Activated B cell treated with CpG ODN at 0.5 μM for 24 hours (primary cell): ENCODE measurements at regions of chr10 and their contacts with region 1.

Region 1: GRCh38 chr10:91389636-91390512 is 20.3 kb upstream of the HECTD2 start:
- DNase-seq: no peak
- ATAC-seq: peak; percentile 91
- H3K4me3 Mint-ChIP-seq: no peak overlapping the region
- H3K27ac Mint-ChIP-seq: no peak overlapping the region
- H3K4me1 Mint-ChIP-seq: peaks cover 3% of the 10 kb centered on the region
- H3K27me3 Mint-ChIP-seq: peaks cover 13% of the 10 kb centered on the region
- CTCF ChIP-seq: peak; percentile 73

Region 2: DNA sequence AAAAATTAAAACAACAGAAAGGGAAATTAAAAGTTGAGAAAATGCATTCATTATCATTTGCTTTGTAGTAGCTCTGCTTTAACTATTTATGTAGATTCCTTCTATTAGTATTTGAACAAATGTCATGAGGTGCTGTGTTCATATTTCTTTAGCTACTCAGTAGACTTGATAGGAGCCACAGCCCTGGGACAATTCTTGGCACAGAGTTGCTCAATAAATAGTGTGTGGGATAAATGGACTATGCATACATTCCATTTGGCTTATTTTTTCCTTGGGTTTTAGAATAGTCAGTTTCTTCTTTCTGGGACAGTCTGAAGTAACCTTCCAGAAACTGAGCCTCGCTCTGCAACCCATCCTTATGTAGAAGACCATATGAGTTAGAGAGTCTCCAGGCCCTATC is 504.7 kb before region 1 on chr10:
- CTCF ChIA-PET with region 1: no interaction called
- POLR2A ChIA-PET with region 1: no interaction called
- intact Hi-C with region 1: loop called (anchors 1 kb)
- DNase-seq: no peak
- ATAC-seq: no peak
- H3K4me3 Mint-ChIP-seq: no peak overlapping the region
- H3K27ac Mint-ChIP-seq: no peak overlapping the region
- H3K4me1 Mint-ChIP-seq: no peaks in the 10 kb centered on the region
- H3K27me3 Mint-ChIP-seq: no peaks in the 10 kb centered on the region
- CTCF ChIP-seq: no peak

Region 3: GRCh38 chr10:91298224-91298871 is 91.5 kb before region 1 on chr10:
- CTCF ChIA-PET with region 1: no interaction called
- POLR2A ChIA-PET with region 1: no interaction called
- intact Hi-C with region 1: loop called (anchors 5 kb)
- DNase-seq: peak; percentile 58
- ATAC-seq: peak; percentile 97
- H3K4me3 Mint-ChIP-seq: peak overlapping the region; percentile 70
- H3K27ac Mint-ChIP-seq: no peak overlapping the region
- H3K4me1 Mint-ChIP-seq: peaks cover 9% of the 10 kb centered on the region
- H3K27me3 Mint-ChIP-seq: peaks cover 8% of the 10 kb centered on the region
- CTCF ChIP-seq: peak; percentile 53

Region 4: DNA sequence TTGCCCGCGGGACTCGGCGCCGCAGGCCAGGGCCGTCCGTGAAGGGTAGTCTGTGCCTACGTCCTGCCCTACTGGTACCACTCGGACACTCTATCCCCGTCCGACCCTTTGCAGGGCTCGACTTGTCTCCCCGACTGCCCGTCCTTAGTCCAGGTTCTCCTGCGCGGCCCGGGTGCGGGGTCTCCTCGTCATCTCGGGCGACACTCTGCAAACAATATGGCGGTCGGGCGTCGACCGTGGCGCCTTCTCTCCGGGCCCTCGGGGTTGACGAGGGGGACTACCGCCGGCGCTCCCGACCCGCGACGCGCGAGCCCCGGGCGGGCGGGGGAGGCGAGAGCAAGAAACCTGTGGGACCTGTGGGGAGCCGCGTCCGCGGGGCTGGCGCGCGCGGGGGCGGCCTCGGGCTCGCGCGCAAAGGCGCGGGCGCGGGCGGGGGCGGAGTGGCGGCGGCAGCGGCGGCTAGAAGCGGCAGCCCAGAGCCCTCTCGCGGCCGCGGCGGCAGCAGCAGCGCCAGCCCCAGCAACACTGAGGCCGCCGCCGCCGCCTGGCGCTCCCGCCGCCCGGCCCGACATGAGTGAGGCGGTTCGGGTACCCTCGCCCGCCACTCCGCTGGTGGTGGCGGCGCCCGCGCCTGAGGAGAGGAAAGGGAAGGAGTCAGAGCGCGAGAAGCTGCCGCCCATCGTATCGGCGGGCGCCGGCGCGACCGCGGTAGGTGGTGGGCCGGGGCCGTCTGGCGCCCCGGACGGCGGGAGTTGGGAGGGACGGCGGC is 20.2 kb after region 1 on chr10 and contains the start of gene HECTD2:
- CTCF ChIA-PET with region 1: interaction called, 3 read pairs
- POLR2A ChIA-PET with region 1: interaction called, 6 read pairs
- intact Hi-C with region 1: loop called (anchors 1 kb)
- DNase-seq: peak; percentile 84
- ATAC-seq: peak; percentile 82
- H3K4me3 Mint-ChIP-seq: peak within 1 kb of the TSS; percentile 89
- H3K27ac Mint-ChIP-seq: peak within 1 kb of the TSS; percentile 90
- H3K4me1 Mint-ChIP-seq: peaks cover 13% of the 10 kb centered on the region
- H3K27me3 Mint-ChIP-seq: no peaks in the 10 kb centered on the region
- CTCF ChIP-seq: no peak
- total RNA-seq, gene HECTD2: 8.1 and 8.6 TPM in 2 replicates

Region 5: DNA sequence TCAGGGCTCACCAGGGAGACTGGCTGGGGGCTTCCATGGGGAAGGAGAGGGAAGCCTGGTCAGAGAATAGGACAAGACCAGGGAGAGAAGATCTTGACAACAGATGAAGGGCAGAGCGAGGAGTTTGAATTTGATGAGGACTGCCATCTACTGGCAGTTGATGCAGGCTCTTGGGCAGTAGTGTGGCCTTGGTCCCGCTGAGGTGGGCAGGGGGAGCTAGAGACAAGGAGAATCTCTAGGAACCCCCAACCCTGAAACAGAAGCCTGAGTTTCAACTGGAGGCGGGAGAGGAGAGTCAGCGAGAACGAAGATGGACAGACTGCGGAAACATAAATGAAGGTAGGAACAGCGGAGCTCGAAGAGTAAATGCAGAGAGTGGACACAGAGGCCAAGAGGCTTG is 162.0 kb after region 1 on chr10:
- CTCF ChIA-PET with region 1: no interaction called
- POLR2A ChIA-PET with region 1: no interaction called
- intact Hi-C with region 1: loop called (anchors 10 kb)
- DNase-seq: no peak
- ATAC-seq: no peak
- H3K4me3 Mint-ChIP-seq: no peak overlapping the region
- H3K27ac Mint-ChIP-seq: no peak overlapping the region
- H3K4me1 Mint-ChIP-seq: no peaks in the 10 kb centered on the region
- H3K27me3 Mint-ChIP-seq: no peaks in the 10 kb centered on the region
- CTCF ChIP-seq: no peak

Region 6: GRCh38 chr10:91632671-91633550 is 243.0 kb after region 1 on chr10 and contains the start of gene PPP1R3C:
- CTCF ChIA-PET with region 1: interaction called, 19 read pairs
- POLR2A ChIA-PET with region 1: no interaction called
- intact Hi-C with region 1: loop called (anchors 1 kb)
- DNase-seq: peak; percentile 32
- ATAC-seq: peak; percentile 74
- H3K4me3 Mint-ChIP-seq: peak within 1 kb of the TSS; percentile 75
- H3K27ac Mint-ChIP-seq: no peak within 1 kb of the TSS
- H3K4me1 Mint-ChIP-seq: peaks cover 14% of the 10 kb centered on the region
- H3K27me3 Mint-ChIP-seq: peaks cover 46% of the 10 kb centered on the region
- CTCF ChIP-seq: no peak
- total RNA-seq, gene PPP1R3C: not detected in 2 replicates

Region 7: DNA sequence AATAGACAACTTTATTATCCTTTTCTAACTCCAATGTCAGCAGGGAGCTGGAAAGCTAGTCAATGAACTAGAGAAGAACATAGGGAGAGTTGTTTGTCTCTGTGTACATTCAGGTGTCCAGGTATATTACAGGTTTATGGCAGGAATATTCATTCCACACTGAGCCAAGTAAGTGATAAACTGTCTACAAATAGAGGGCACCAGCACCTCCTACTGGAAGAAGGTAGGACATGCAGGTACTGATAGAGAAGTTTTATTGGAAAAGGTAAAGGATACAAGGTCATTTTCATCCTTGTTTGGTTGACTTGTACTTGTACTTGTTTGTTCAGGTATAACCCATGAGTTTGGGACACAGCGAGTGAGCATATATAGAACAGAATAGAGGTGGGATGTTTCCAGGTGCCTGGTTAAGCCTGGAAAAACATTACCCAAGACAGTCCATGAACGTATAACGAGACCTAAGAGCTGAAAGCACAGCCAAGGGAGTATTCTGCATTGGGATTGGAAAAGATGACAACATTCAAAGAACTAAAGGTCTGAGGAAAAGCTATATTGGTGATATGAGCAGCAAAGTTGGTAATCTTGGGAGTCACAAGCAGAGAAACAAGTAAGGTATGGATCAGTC is 304.4 kb after region 1 on chr10:
- CTCF ChIA-PET with region 1: no interaction called
- POLR2A ChIA-PET with region 1: no interaction called
- intact Hi-C with region 1: loop called (anchors 1 kb)
- DNase-seq: no peak
- ATAC-seq: no peak
- H3K4me3 Mint-ChIP-seq: no peak overlapping the region
- H3K27ac Mint-ChIP-seq: no peak overlapping the region
- H3K4me1 Mint-ChIP-seq: no peaks in the 10 kb centered on the region
- H3K27me3 Mint-ChIP-seq: peaks cover 3% of the 10 kb centered on the region
- CTCF ChIP-seq: no peak